H1 (cell line): ENCODE measurements at regions of chr11 and their contacts with region 1.

Region 1: GRCh38 chr11:121655537-121656327 is 203.0 kb upstream of the SORL1-AS1 start:
- DNase-seq: peak in 1 of 2 experiments; percentile 94
- H3K4me3 ChIP-seq: peak overlapping the region; percentile 19 to 60 (median 34); a peak in 7 of 8 replicates
- H3K27ac ChIP-seq: no peak overlapping the region
- H3K4me1 ChIP-seq: peaks cover 7 to 13% (median 11%) of the 10 kb centered on the region in 4 experiments
- H3K27me3 ChIP-seq: no peaks in the 10 kb centered on the region
- CTCF ChIP-seq: peak; percentile 85 to 97 (median 90)
- EP300 ChIP-seq: no peak
- POLR2A ChIP-seq: no peak
- RAD21 ChIP-seq: peak; percentile 97 to 98

Region 2: GRCh38 chr11:121643535-121644512 is 11.9 kb before region 1 on chr11:
- CTCF ChIA-PET with region 1: interaction called, 25 read pairs
- POLR2A ChIA-PET with region 1: interaction called, 3 read pairs
- DNase-seq: no peak
- H3K4me3 ChIP-seq: peak overlapping the region in 1 of 4 experiments; percentile 16; a peak in 1 of 8 replicates
- H3K27ac ChIP-seq: no peak overlapping the region
- H3K4me1 ChIP-seq: peaks cover 0 to 10% (median 8%) of the 10 kb centered on the region in 4 experiments; a peak in 4 of 7 replicates
- H3K27me3 ChIP-seq: no peaks in the 10 kb centered on the region
- CTCF ChIP-seq: no peak
- EP300 ChIP-seq: no peak
- POLR2A ChIP-seq: no peak
- RAD21 ChIP-seq: no peak

Region 3: DNA sequence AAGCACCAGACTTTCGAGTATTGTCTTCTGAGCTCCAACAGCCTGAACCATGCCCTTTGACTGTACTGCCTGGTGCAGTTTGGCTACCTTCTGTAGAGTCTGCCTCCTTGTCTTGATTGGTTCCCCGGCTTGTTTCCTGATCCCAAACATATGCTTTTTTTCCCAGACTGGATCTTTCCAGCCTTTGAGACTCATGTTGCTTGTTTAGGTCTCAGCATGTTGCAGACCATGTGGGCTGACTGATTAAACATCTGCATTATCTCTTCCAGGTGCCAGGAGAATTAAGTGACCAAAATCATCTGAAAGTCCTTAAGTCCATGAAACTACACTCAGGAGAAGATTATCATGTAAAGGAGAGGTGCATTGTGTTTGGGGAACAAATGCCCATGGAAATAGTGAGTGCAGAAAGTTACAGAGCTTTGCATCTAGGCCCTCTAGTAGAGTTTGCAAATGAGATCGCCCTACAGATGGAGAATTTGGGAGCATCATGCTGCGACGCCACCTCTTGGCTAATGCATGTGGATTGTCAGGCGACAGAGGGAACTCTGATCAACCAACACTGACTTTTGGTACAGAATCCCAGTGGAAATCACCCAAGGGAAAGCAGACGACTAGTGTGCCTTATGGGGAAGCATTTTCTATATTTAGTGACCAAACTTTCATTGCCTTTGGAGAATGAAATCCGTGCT is 271.5 kb after region 1 on chr11:
- CTCF ChIA-PET with region 1: interaction called, 11 read pairs
- POLR2A ChIA-PET with region 1: no interaction called
- DNase-seq: no peak
- H3K4me3 ChIP-seq: no peak overlapping the region
- H3K27ac ChIP-seq: no peak overlapping the region
- H3K4me1 ChIP-seq: peaks cover 4 to 15% (median 9%) of the 10 kb centered on the region in 4 experiments; a peak in 5 of 7 replicates
- H3K27me3 ChIP-seq: no peaks in the 10 kb centered on the region; a peak in 1 of 7 replicates
- CTCF ChIP-seq: peak in 2 of 3 experiments; percentile 25 to 31; a peak in 2 of 4 replicates
- EP300 ChIP-seq: no peak
- POLR2A ChIP-seq: no peak
- RAD21 ChIP-seq: peak; percentile 24 to 43; a peak in 1 of 4 replicates

Region 4: GRCh38 chr11:122101625-122102291 is 446.0 kb after region 1 on chr11:
- CTCF ChIA-PET with region 1: interaction called, 75 read pairs
- POLR2A ChIA-PET with region 1: interaction called, 4 read pairs
- DNase-seq: peak; percentile 58 to 63
- H3K4me3 ChIP-seq: peak overlapping the region; percentile 20 to 58 (median 32); a peak in 5 of 8 replicates
- H3K27ac ChIP-seq: no peak overlapping the region
- H3K4me1 ChIP-seq: peaks cover 2 to 10% (median 7%) of the 10 kb centered on the region in 4 experiments; a peak in 6 of 7 replicates
- H3K27me3 ChIP-seq: peaks cover 0 to 15% (median 12%) of the 10 kb centered on the region in 4 experiments; a peak in 6 of 7 replicates
- CTCF ChIP-seq: peak; percentile 60 to 75 (median 65)
- EP300 ChIP-seq: no peak
- POLR2A ChIP-seq: no peak
- RAD21 ChIP-seq: peak; percentile 79

Region 5: GRCh38 chr11:122126024-122126688 is 470.4 kb after region 1 on chr11:
- CTCF ChIA-PET with region 1: interaction called, 10 read pairs
- POLR2A ChIA-PET with region 1: interaction called, 3 read pairs
- DNase-seq: no peak
- H3K4me3 ChIP-seq: no peak overlapping the region
- H3K27ac ChIP-seq: no peak overlapping the region
- H3K4me1 ChIP-seq: no peaks in the 10 kb centered on the region
- H3K27me3 ChIP-seq: no peaks in the 10 kb centered on the region
- CTCF ChIP-seq: no peak
- EP300 ChIP-seq: no peak
- POLR2A ChIP-seq: no peak
- RAD21 ChIP-seq: no peak

Region 6: GRCh38 chr11:122505304-122506006 is 849.7 kb after region 1 on chr11:
- CTCF ChIA-PET with region 1: interaction called, 29 read pairs
- POLR2A ChIA-PET with region 1: no interaction called
- DNase-seq: peak; percentile 63 to 86
- H3K4me3 ChIP-seq: no peak overlapping the region
- H3K27ac ChIP-seq: no peak overlapping the region
- H3K4me1 ChIP-seq: no peaks in the 10 kb centered on the region
- H3K27me3 ChIP-seq: no peaks in the 10 kb centered on the region
- CTCF ChIP-seq: peak; percentile 92 to 97 (median 97)
- EP300 ChIP-seq: no peak
- POLR2A ChIP-seq: no peak
- RAD21 ChIP-seq: peak; percentile 98 to 99